T-cell (primary cell): ENCODE measurements at regions of chr5 and their contacts with region 1.

Region 1: DNA sequence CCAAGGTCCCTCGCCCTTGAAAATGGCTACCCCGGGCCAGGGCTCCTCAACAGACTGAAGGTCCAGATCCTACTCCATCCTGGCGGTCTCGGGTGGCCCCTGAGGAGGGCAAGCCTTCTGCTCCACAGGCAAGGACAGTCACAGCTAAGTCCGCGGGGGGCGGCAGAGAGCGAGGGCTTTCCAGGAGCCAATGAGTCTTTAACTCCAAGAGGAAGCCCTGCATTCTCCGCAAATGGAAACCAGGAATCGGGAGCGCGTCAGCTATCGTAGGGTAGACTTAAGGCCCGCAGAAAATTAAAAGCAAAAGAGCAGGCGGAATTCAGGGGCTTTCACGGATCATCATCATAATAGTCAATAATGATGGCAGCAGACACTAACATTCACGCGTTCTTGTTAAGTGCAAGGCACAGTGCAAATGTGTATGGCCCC is 87.8 kb upstream of the TNFAIP8 start:
- DNase-seq: peak; percentile 55 to 93 (median 81)
- ATAC-seq: peak; percentile 55 to 73 (median 60)
- H3K4me3 ChIP-seq: peak overlapping the region; percentile 87 to 98
- H3K4me3 Mint-ChIP-seq: peak overlapping the region; percentile 98 to 100 (median 100)
- H3K27ac ChIP-seq: peak overlapping the region; percentile 86
- H3K27ac Mint-ChIP-seq: peak overlapping the region; percentile 97 to 99
- H3K4me1 ChIP-seq: peaks cover 28 to 29% of the 10 kb centered on the region in 2 experiments
- H3K4me1 Mint-ChIP-seq: peaks cover 55 to 75% (median 61%) of the 10 kb centered on the region in 3 donors
- H3K27me3 ChIP-seq: no peaks in the 10 kb centered on the region
- H3K27me3 Mint-ChIP-seq: no peaks in the 10 kb centered on the region

Region 2: DNA sequence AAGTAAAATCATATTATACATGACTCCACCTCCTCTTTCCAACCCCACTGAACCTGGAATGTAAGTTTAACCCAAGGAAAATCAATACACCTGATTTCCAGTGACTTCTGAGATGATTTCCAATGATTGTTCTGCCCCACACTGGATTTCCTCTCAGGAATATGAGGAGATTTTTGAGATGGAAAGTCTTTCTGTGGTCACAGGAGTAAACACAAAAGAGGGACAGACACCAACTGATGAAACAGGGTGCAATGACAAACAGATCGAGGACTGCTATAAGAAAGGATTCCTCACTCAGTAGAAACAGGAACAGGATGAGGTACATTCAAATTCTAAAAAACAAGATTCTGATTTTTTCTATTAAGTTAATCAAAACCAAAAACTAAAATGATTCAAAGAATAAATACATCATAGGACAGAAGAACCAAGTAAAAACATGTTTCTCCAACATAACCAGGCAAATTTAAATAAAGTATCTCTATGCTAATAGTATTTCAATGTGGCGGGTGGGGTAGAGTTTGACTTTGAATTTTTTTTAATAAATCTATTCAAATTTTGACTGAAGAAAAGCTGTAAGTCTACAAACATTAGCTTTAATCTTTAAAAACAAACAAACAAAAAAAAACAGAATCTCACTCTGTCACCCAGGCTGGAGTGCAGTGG is 321.7 kb before region 1 on chr5:
- CTCF ChIA-PET with region 1: no interaction called
- POLR2A ChIA-PET with region 1: no interaction called
- DNase-seq: no peak
- ATAC-seq: no peak
- H3K4me3 ChIP-seq: no peak overlapping the region
- H3K4me3 Mint-ChIP-seq: no peak overlapping the region
- H3K27ac ChIP-seq: no peak overlapping the region
- H3K27ac Mint-ChIP-seq: no peak overlapping the region
- H3K4me1 ChIP-seq: no peaks in the 10 kb centered on the region
- H3K4me1 Mint-ChIP-seq: no peaks in the 10 kb centered on the region
- H3K27me3 ChIP-seq: no peaks in the 10 kb centered on the region
- H3K27me3 Mint-ChIP-seq: no peaks in the 10 kb centered on the region

Region 3: GRCh38 chr5:119070828-119071572 is 197.0 kb before region 1 on chr5 and contains the start of gene DMXL1:
- CTCF ChIA-PET with region 1: interaction called, 4 to 13 read pairs
- POLR2A ChIA-PET with region 1: interaction called in 1 of 2 experiments, 4 read pairs
- DNase-seq: peak; percentile 92 to 99 (median 98)
- ATAC-seq: peak; percentile 84 to 87 (median 86)
- H3K4me3 ChIP-seq: peak within 1 kb of the TSS; percentile 83 to 94
- H3K4me3 Mint-ChIP-seq: peak within 1 kb of the TSS; percentile 91 to 99 (median 99)
- H3K27ac ChIP-seq: peak within 1 kb of the TSS; percentile 97
- H3K27ac Mint-ChIP-seq: peak within 1 kb of the TSS; percentile 99
- H3K4me1 ChIP-seq: peaks cover 12 to 17% of the 10 kb centered on the region in 2 experiments
- H3K4me1 Mint-ChIP-seq: peaks cover 35 to 38% (median 36%) of the 10 kb centered on the region in 3 donors
- H3K27me3 ChIP-seq: no peaks in the 10 kb centered on the region
- H3K27me3 Mint-ChIP-seq: no peaks in the 10 kb centered on the region
- total RNA-seq, gene DMXL1: 25.8 to 37.2 (median 28.2) TPM

Region 4: GRCh38 chr5:119290161-119290569 is 22.2 kb after region 1 on chr5:
- CTCF ChIA-PET with region 1: interaction called in 1 of 2 experiments, 22 read pairs
- POLR2A ChIA-PET with region 1: interaction called in 1 of 2 experiments, 3 read pairs
- DNase-seq: peak in 1 of 35 experiments; percentile 58
- ATAC-seq: peak; percentile 43 to 56 (median 50)
- H3K4me3 ChIP-seq: peak overlapping the region; percentile 15 to 40
- H3K4me3 Mint-ChIP-seq: peak overlapping the region; percentile 75 to 100 (median 78)
- H3K27ac ChIP-seq: peak overlapping the region; percentile 92
- H3K27ac Mint-ChIP-seq: peak overlapping the region; percentile 94 to 96
- H3K4me1 ChIP-seq: peaks cover 40 to 77% of the 10 kb centered on the region in 2 experiments
- H3K4me1 Mint-ChIP-seq: peaks cover 82 to 90% (median 87%) of the 10 kb centered on the region in 3 donors
- H3K27me3 ChIP-seq: no peaks in the 10 kb centered on the region
- H3K27me3 Mint-ChIP-seq: no peaks in the 10 kb centered on the region